Breast epithelium (tissue), 4 donors: ENCODE measurements at regions of chr19 and their contacts with region 1.

Region 1: DNA sequence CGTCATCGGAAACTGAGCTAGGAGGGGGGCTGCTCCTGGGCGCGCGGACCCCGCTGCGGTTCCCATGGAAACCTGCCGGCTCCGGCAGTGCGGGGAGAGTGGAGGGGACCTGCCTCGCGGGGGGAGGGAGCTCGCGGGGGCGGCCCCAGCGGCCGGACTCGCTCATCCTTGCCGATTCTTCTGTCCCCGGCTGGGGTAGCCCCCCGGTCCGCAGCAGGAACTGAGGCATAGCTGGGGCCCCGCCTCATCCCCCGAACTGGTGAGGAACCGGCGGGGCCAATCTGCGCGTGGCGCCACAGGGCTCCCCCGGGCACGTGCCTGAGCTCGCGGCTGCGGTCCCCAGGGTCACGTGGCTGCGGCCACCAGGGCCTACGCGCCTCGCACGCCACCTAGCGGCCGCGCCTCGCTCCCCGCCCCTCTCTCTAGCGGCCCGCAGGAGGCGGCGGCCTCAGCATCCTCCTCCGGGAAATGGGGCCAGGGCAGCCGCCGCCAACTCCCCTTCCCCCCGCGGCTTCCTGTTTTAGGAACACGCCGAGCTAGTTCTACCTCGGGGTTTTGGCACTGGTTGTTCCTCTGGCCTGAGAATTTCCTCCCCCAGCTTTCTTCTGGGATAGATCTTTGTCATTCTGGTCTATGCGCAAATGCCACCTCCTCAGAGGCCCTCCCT is 1.7 kb upstream of the ELAVL3 start:
- DNase-seq: peak; percentile 65 to 67
- H3K4me3 ChIP-seq: peak overlapping the region; percentile 21 to 60 (median 42)
- H3K27ac ChIP-seq: no peak overlapping the region
- H3K4me1 ChIP-seq: peaks cover 6 to 13% of the 10 kb centered on the region in 2 donors
- H3K27me3 ChIP-seq: peaks cover 22 to 53% of the 10 kb centered on the region in 2 donors
- CTCF ChIP-seq: peak; percentile 87 to 93 (median 87)
- POLR2A ChIP-seq: no peak

Region 2: GRCh38 chr19:10027158-10027693 is 1455.3 kb before region 1 on chr19:
- intact Hi-C with region 1: no loop called
- DNase-seq: no peak
- H3K4me3 ChIP-seq: peak overlapping the region in 2 of 3 donors; percentile 19 to 33
- H3K27ac ChIP-seq: no peak overlapping the region
- H3K4me1 ChIP-seq: peaks cover 0 to 4% of the 10 kb centered on the region in 2 donors
- H3K27me3 ChIP-seq: peaks cover 0 to 12% of the 10 kb centered on the region in 2 donors
- CTCF ChIP-seq: no peak
- POLR2A ChIP-seq: no peak

Region 3: DNA sequence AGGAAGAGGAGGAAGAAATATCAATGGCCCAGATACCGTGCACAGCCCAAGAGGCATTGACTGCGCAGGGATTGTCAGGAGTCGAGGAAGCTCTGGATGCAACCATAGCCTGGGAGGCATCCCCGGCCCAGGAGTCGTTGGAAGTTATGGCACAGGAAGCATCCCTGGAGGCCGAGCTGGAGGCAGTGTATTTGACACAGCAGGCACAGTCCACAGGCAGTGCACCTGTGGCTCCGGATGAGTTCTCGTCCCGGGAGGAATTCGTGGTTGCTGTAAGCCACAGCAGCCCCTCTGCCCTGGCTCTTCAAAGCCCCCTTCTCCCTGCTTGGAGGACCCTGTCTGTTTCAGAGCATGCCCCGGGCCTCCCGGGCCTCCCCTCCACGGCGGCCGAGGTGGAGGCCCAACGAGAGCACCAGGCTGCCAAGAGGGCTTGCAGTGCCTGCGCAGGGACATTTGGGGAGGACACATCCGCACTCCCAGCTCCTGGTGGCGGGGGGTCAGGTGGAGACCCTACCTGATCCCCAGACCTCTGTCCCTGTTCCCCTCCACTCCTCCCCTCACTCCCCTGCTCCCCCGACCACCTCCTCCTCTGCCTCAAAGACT is 1015.3 kb before region 1 on chr19:
- intact Hi-C with region 1: no loop called
- DNase-seq: no peak
- H3K4me3 ChIP-seq: no peak overlapping the region
- H3K27ac ChIP-seq: no peak overlapping the region
- H3K4me1 ChIP-seq: no peaks in the 10 kb centered on the region
- H3K27me3 ChIP-seq: no peaks in the 10 kb centered on the region
- CTCF ChIP-seq: no peak
- POLR2A ChIP-seq: no peak

Region 4: GRCh38 chr19:11293433-11294389 is 188.8 kb before region 1 on chr19:
- intact Hi-C with region 1: loop called (anchors 10 kb)
- DNase-seq: peak; percentile 93 to 95
- H3K4me3 ChIP-seq: peak overlapping the region in 2 of 3 donors; percentile 34 to 51
- H3K27ac ChIP-seq: peak overlapping the region in 1 of 2 donors; percentile 26
- H3K4me1 ChIP-seq: no peaks in the 10 kb centered on the region
- H3K27me3 ChIP-seq: no peaks in the 10 kb centered on the region
- CTCF ChIP-seq: peak; percentile 98 to 99 (median 98)
- POLR2A ChIP-seq: no peak

Region 5: DNA sequence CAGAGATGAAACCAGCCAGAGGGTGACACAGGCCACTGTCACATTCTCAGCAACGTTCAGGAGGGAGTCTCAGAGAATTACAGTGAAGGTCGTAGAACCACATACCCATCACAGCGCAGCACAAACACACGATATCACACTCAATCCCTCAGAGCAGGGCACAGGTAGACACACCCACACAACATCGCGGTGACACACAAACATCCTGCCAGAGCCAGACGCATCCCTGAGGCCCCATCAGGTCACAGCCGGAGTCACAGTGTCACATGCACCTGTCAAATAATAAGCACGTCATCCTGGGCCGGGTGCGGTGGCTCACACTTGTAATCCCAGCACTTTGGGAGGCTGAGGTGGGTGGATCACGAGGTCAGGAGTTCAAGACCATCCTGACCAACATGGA is 19.1 kb before region 1 on chr19:
- intact Hi-C with region 1: loop called (anchors 1 kb)
- DNase-seq: no peak
- H3K4me3 ChIP-seq: no peak overlapping the region
- H3K27ac ChIP-seq: no peak overlapping the region
- H3K4me1 ChIP-seq: no peaks in the 10 kb centered on the region
- H3K27me3 ChIP-seq: no peaks in the 10 kb centered on the region
- CTCF ChIP-seq: no peak
- POLR2A ChIP-seq: no peak

Region 6: GRCh38 chr19:11551603-11552235 is 69.2 kb after region 1 on chr19:
- intact Hi-C with region 1: no loop called
- DNase-seq: peak in 1 of 2 donors; percentile 64
- H3K4me3 ChIP-seq: peak overlapping the region in 2 of 3 donors; percentile 5 to 40
- H3K27ac ChIP-seq: peak overlapping the region; percentile 74 to 91
- H3K4me1 ChIP-seq: peaks cover 0 to 5% of the 10 kb centered on the region in 2 donors
- H3K27me3 ChIP-seq: no peaks in the 10 kb centered on the region
- CTCF ChIP-seq: no peak
- POLR2A ChIP-seq: no peak

Region 7: DNA sequence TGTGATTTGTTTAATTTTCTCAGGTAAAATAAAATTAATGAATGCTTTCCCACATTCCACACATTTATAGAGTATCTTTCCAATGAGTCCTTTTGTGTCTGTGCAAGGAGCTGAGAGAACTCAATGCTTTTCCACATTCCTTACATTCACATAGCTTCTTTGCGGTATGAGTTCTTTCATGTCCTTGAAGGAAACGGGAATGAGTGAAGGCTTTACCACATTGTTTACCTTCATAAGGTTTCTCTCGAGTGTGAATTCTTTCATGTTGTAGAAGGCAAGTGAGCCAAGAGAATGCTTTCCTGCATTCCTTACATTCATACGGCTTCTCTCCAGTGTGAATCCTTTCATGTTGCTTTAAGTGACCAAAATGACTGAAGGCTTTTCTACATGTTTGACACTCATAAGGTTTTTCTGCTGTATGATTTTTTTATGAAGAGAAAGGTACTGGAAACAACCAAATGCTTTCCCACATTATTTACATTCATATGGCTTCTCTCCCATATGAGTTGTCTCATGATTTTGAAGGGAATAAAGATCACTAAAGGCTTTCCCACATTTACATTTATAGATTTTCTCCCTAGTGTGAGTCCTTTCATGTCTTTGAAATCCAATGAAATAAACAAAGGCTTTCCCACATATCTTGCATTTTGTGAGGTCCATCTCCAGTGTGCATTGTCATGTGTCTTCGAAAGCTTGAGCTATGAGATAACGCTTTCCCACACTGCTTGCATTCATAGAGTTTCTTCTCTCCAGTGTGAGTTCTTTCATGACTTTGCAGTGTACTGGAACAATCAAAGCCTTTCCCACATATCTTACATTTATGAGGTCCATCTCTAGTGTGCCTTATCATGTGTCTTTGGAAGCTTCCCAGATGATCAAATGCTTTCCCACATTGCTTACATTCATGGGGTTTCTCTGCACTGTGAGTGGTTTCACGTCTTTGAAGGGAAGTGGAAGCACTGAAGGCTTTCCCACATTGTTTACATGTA is 897.5 kb after region 1 on chr19:
- intact Hi-C with region 1: no loop called
- DNase-seq: no peak
- H3K4me3 ChIP-seq: no peak overlapping the region
- H3K27ac ChIP-seq: no peak overlapping the region
- H3K4me1 ChIP-seq: no peaks in the 10 kb centered on the region
- H3K27me3 ChIP-seq: no peaks in the 10 kb centered on the region
- CTCF ChIP-seq: no peak
- POLR2A ChIP-seq: no peak